Activated T-helper 1 cell treated with anti-CD3 and anti-CD28 coated beads, Interleukin-12 subunit alpha, Interleukin-12 subunit beta, Interleukin-2, Interleukin-4 antibody, amounts not matched to agents 30 ng/mL and 10 ng/mL and 1 ng/mL, durations not matched to agents 14 hours and 24 hours and 36 hours (primary cell): ENCODE measurements at regions of chr14 and their contacts with region 1.

Region 1: DNA sequence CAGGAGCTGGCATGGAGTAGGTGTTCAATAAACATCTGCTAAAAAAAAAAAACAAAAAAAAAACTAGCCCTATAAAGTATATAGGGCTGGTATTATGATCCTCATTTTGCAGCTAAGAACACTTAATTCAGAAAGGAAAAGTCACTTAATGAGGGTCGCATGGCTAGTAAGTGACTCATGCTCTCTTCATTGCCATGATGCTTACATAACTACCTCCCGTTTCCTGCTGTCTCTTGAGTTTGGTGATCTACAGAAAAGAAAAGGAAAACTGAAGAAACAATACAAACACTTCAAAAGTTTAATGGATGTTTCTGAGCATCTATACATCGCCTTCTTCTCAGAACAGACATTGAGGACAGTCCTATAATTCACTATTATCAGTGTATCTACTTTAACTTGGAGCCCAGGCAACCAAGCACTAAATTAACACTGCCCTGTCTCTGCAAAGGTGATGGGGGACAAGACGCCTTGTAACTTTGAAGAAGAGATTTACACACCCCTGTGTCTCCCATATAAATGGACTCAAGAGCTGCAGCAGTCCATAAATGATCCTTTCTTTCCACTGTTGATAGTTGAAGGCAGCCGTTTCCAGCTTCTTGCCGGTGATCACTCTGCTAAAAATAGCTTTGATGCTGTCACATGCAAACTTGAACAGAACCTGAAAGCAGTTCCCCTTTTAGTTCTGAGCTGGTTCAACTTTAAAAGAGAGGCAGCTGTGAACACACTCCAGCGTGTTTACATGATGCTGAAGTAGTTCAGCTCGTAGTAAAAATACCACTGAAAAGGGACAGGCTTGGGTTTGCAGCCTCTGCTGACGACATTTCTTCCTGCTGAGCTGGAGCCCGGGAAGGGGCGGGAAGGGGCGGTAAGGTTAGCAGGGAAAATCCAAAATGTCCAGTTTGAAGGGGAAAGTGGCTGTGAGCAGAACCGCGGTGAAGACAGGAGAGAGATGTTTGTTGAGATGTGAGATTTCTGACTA is 113.3 kb downstream of the FOXN3 start:
- DNase-seq: peak; percentile 25
- H3K4me3 Mint-ChIP-seq: peak overlapping the region; percentile 76
- H3K27ac Mint-ChIP-seq: peak overlapping the region; percentile 87
- H3K4me1 Mint-ChIP-seq: peaks cover 57% of the 10 kb centered on the region
- H3K27me3 Mint-ChIP-seq: no peaks in the 10 kb centered on the region

Region 2: DNA sequence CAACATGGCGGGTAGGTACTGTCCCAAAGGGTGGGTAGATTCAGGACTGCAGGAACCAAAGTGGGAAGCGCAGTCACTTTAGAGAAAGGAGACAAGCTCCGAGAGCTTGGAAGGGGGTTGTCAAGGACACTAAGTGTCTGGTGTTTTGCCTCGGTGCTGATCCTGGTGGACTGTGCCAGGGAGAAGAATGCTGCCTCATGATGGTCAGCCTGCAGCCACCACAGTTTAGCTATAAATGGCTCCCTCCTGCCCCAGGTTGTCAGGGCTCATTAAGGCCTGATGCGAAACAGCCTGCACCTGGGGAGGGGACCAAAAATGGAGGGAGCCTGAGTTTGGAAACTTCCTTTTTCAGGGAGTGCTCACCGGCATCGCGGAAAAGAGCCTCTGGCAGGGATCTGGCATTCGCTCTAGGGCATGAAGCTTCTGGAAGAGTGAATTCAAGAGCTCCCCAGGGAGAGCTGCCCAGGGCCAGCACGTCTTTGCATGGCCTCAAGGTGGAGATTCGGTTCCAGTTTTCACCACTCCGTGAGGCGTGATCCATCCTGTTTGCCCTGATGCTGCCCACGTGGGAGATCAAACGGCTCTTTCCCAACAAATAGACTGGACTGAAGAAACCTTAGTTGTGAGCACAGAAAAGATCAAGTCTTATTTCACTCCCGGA is 50.7 kb before region 1 on chr14:
- intact Hi-C with region 1: no loop called
- DNase-seq: no peak
- H3K4me3 Mint-ChIP-seq: no peak overlapping the region
- H3K27ac Mint-ChIP-seq: no peak overlapping the region
- H3K4me1 Mint-ChIP-seq: peaks cover 14% of the 10 kb centered on the region
- H3K27me3 Mint-ChIP-seq: no peaks in the 10 kb centered on the region

Region 3: DNA sequence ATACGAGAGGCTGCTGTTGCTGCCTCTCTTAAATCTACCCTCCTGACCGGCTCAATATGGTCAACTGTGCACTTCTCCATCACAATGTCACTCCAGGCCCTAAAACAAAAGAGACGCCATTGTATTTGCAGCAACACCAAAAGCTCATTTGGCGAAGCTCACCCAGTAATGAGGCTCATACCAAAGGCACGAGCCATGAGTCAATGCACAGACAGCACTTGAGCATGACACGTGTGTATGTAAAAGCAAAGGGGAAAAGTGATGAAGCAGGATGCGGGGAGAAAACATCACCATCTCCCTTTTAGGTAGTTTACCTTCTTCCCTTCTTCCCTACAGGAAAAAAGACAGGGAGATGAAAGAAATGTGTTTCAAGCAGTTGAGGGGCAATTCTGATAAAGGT is 37.0 kb before region 1 on chr14:
- intact Hi-C with region 1: loop called (anchors 5 kb)
- DNase-seq: no peak
- H3K4me3 Mint-ChIP-seq: no peak overlapping the region
- H3K27ac Mint-ChIP-seq: no peak overlapping the region
- H3K4me1 Mint-ChIP-seq: peaks cover 39% of the 10 kb centered on the region
- H3K27me3 Mint-ChIP-seq: no peaks in the 10 kb centered on the region

Region 4: GRCh38 chr14:89283315-89284060 is 20.3 kb before region 1 on chr14:
- intact Hi-C with region 1: loop called (anchors 2 kb)
- DNase-seq: peak; percentile 9
- H3K4me3 Mint-ChIP-seq: peak overlapping the region; percentile 28
- H3K27ac Mint-ChIP-seq: peak overlapping the region; percentile 45
- H3K4me1 Mint-ChIP-seq: peaks cover 75% of the 10 kb centered on the region
- H3K27me3 Mint-ChIP-seq: no peaks in the 10 kb centered on the region

Region 5: DNA sequence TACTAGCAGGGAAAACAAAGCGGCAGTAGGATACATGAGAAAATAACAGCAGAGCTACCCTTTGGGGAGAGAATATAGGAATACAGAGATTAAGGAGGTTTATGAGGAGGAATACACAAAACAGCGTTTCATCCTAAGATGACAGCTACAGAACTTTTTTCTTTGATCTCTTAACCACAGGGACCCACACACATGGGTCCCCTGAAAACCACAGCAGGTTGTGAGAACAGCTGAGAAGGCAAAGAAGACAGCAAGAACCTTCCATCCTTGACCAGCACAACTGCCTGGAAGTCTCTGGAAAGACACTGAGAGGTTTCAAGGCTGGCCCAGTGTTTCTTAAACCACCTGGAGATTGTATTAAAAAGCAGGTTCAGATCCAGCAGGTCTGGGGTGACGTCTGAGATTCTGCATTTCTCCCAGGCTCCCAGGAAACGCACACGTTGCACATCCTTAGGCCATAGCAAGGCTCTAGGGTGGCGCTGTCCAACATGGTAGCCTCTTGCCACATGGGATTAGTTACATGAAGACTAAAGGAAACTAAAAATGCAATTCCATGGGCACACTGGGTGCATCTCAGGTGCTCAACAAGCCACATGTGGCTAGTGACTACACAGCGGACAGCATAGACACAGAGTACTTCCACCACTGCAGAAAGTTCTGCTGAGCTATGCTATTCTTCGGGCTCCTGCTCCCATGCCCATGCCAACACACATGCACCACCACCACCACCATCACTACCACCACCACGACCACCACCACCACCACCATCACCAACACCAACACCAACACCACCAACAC is 21.0 kb after region 1 on chr14:
- intact Hi-C with region 1: loop called (anchors 2 kb)
- DNase-seq: no peak
- H3K4me3 Mint-ChIP-seq: no peak overlapping the region
- H3K27ac Mint-ChIP-seq: peak overlapping the region; percentile 61
- H3K4me1 Mint-ChIP-seq: peaks cover 26% of the 10 kb centered on the region
- H3K27me3 Mint-ChIP-seq: no peaks in the 10 kb centered on the region

Region 6: GRCh38 chr14:89773644-89774316 is 470.0 kb after region 1 on chr14:
- intact Hi-C with region 1: loop called (anchors 2 kb)
- DNase-seq: peak; percentile 32
- H3K4me3 Mint-ChIP-seq: peak overlapping the region; percentile 45
- H3K27ac Mint-ChIP-seq: peak overlapping the region; percentile 34
- H3K4me1 Mint-ChIP-seq: peaks cover 17% of the 10 kb centered on the region
- H3K27me3 Mint-ChIP-seq: peaks cover 26% of the 10 kb centered on the region